K562 (cell line): ENCODE measurements at regions of chr17 and their contacts with region 1.

Region 1: GRCh38 chr17:32755045-32755805 is 121.7 kb downstream of the MYO1D start:
- DNase-seq: peak; percentile 41 to 54 (median 51)
- ATAC-seq: peak; percentile 90
- H3K4me3 ChIP-seq: no peak overlapping the region
- H3K27ac ChIP-seq: no peak overlapping the region
- H3K4me1 ChIP-seq: no peaks in the 10 kb centered on the region
- H3K27me3 ChIP-seq: no peaks in the 10 kb centered on the region
- CTCF ChIP-seq: peak; percentile 45 to 85 (median 48); a peak in 4 of 6 replicates
- EP300 ChIP-seq: no peak
- POLR2A ChIP-seq: no peak
- RAD21 ChIP-seq: peak; percentile 31 to 83; a peak in 3 of 4 replicates

Region 2: DNA sequence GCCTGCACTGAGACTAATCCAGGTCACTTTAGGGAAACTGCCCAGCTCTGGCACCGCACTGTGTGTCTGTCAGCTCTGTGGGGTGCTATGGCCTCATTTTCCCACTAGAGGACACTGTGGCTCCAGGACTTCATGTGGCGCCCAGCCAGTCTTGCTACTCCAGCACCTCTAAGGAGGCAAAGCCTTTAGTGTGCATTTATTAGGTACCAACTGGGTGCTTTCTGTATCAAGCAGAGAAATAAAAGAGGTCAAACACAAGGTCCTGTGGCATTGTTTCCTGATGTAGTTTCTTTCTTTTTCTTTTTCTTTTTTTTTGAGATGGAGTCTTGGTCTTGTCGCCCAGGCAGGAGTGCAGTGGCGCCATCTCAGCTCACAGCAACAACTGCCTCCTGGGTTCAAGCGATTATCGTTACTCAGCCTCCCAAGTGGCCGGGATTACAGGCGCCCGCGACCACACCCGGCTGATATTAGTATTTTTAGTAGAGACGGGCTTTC is 502.1 kb before region 1 on chr17:
- CTCF ChIA-PET with region 1: interaction called, 3 read pairs
- POLR2A ChIA-PET with region 1: no interaction called
- in situ Hi-C with region 1: no loop called
- intact Hi-C with region 1: loop called (anchors 10 kb)
- DNase-seq: peak; percentile 78 to 88 (median 80)
- ATAC-seq: peak; percentile 99
- H3K4me3 ChIP-seq: no peak overlapping the region
- H3K27ac ChIP-seq: no peak overlapping the region
- H3K4me1 ChIP-seq: peaks cover 0 to 4% of the 10 kb centered on the region in 2 experiments; a peak in 2 of 5 replicates
- H3K27me3 ChIP-seq: peaks cover 30 to 46% of the 10 kb centered on the region in 2 experiments
- CTCF ChIP-seq: peak; percentile 96 to 99 (median 99)
- EP300 ChIP-seq: no peak
- POLR2A ChIP-seq: no peak
- RAD21 ChIP-seq: peak; percentile 87 to 97

Region 3: DNA sequence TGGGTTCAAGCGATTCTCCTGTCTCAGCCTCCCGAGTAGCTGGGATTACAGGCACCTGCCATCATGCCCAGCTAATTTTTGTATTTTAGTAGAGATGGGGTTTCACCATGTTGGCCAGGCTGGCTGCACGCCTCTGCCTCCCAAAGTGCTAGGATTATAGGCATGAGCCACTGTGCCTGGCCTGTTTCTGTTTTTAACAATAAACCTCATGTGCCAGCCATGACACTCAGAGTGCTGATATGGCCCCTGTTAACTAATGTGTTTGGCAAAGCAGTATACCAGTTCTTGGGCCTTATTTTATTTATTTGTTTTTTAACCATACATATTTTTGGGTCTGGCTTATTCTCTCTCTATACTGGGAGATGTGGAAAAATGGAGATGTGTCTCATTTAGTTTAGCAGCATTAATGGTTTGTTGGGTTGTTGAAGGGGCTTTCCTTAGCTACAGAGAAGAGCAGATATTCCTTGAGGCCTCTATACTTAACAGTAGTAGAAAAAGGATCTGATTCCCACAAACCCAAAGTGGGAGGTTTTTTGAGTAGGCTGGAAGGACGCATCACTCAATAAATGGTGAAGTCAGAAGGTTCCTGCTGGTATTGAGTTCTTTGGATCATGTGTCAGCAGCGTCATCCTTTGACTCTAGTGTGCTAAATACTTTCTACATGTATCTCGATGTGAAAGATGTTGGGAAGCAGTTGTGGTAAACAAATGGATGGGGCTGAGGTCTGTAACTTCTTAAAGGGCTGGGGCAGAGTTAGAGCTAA is 284.6 kb before region 1 on chr17:
- CTCF ChIA-PET with region 1: no interaction called
- POLR2A ChIA-PET with region 1: no interaction called
- in situ Hi-C with region 1: loop called (anchors 5 kb)
- intact Hi-C with region 1: no loop called
- DNase-seq: no peak
- ATAC-seq: no peak
- H3K4me3 ChIP-seq: no peak overlapping the region
- H3K27ac ChIP-seq: no peak overlapping the region
- H3K4me1 ChIP-seq: no peaks in the 10 kb centered on the region
- H3K27me3 ChIP-seq: no peaks in the 10 kb centered on the region
- CTCF ChIP-seq: no peak
- EP300 ChIP-seq: no peak
- POLR2A ChIP-seq: no peak
- RAD21 ChIP-seq: no peak

Region 4: DNA sequence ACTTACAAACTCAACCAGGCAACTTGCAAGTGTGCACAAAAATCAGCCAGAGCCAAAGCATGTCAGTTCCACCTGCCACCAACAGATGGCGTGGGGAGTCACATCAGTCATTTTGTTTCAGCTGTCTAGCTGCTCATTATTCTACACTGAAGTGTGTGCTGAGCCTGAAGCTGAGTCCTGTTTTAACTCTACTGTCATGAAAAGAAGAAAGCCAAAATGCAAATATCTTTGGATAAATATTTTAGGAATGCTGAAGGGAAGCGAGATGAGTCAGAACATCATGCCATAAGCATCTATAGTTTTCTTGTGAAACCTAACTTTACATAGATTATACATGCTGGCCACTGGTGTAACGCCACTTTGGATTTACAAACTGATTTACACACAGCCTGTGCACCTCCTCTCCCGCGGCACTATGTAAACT is 95.8 kb before region 1 on chr17:
- CTCF ChIA-PET with region 1: interaction called, 4 read pairs
- POLR2A ChIA-PET with region 1: no interaction called
- in situ Hi-C with region 1: no loop called
- intact Hi-C with region 1: loop called (anchors 1 kb)
- DNase-seq: peak; percentile 65 to 72 (median 70)
- ATAC-seq: peak; percentile 88
- H3K4me3 ChIP-seq: no peak overlapping the region
- H3K27ac ChIP-seq: no peak overlapping the region
- H3K4me1 ChIP-seq: no peaks in the 10 kb centered on the region
- H3K27me3 ChIP-seq: no peaks in the 10 kb centered on the region
- CTCF ChIP-seq: peak; percentile 83 to 87 (median 83)
- EP300 ChIP-seq: no peak
- POLR2A ChIP-seq: no peak
- RAD21 ChIP-seq: peak in 1 of 2 experiments; percentile 67; a peak in 3 of 4 replicates

Region 5: DNA sequence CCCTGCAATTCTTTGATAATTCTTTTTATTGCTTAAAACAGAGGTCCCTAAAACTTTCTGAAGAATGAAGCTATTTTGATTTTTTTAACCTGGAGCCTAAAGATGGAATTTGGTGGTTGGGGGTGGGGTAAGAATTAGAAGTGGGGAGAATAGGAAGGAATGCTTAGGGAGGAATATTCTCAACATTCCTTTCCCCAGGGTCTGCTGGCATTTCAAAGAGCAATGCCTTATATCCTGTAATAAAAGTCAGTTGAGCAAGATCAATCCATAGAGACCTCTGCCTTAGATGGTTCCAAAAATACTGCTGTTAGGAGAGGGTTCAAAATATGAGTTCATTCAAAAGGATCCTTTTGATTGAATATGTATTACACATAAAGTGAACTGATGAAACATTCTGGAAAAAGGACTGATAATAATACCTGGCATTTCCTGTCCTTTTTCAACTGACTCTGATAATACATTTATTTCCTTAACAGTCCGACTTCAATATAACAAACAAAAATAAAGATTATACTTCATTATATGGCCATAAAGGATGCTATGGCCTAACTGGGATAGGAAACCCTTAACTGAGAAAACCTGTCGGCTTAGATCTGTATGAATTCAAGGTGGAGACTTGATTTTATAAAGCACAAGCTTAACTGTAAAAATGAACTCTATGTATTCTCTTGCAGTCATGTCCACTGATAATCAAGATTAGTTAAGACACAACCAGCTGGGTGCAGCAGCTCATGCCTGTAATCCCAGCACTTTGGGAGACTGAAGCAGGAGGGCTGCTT is 19.3 kb after region 1 on chr17:
- CTCF ChIA-PET with region 1: no interaction called
- POLR2A ChIA-PET with region 1: no interaction called
- in situ Hi-C with region 1: no loop called
- intact Hi-C with region 1: loop called (anchors 1 kb)
- DNase-seq: no peak
- ATAC-seq: no peak
- H3K4me3 ChIP-seq: no peak overlapping the region
- H3K27ac ChIP-seq: no peak overlapping the region
- H3K4me1 ChIP-seq: no peaks in the 10 kb centered on the region
- H3K27me3 ChIP-seq: no peaks in the 10 kb centered on the region
- CTCF ChIP-seq: no peak
- EP300 ChIP-seq: no peak
- POLR2A ChIP-seq: no peak
- RAD21 ChIP-seq: no peak